ENCODE measurements at regions of chr9 and their contacts with region 1.

Region 1: GRCh38 chr9:92954049-92954861 is 6.9 kb downstream of the FGD3 start:
- DNase-seq: no peak
- H3K4me3 ChIP-seq: no peak overlapping the region
- H3K4me3 Mint-ChIP-seq: no peak overlapping the region
- H3K27ac Mint-ChIP-seq: no peak overlapping the region
- H3K4me1 ChIP-seq: no peaks in the 10 kb centered on the region
- H3K4me1 Mint-ChIP-seq: no peaks in the 10 kb centered on the region
- H3K27me3 ChIP-seq: no peaks in the 10 kb centered on the region
- H3K27me3 Mint-ChIP-seq: no peaks in the 10 kb centered on the region
- CTCF ChIP-seq: no peak

Region 2: DNA sequence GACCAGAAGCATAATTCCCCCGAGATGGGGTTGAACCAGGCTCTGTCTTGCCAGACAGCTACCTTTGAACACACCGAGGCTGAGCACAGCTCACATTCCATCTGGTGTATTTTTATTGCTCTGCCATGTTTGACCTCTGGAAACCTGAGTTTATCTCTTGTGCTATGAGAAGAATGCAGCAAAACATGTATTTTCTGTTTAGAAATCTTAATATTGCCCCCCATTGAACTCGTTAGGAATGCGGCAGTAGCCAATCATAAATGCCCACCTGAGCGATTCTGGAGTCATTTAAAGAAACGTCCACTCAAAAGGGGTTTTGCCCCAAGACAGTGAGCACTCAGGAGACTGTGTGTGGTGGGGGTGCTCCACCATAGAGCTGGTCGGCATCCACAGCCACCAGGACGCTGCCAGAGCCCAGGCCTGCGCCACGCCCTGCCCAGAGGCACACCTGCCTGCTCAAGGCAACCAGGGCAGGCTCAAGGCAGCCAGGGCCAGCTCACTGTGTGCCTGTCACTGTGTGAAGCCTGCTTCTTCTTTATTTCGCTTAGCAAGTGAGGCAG is 20.0 kb after region 1 on chr9:
- CTCF ChIA-PET with region 1: interaction called, 3 read pairs
- POLR2A ChIA-PET with region 1: interaction called, 3 read pairs
- intact Hi-C with region 1: loop called (anchors 1 kb)
- DNase-seq: peak; percentile 80 to 92
- H3K4me3 ChIP-seq: peak overlapping the region; percentile 22
- H3K4me3 Mint-ChIP-seq: peak overlapping the region; percentile 78
- H3K27ac Mint-ChIP-seq: peak overlapping the region; percentile 99
- H3K4me1 ChIP-seq: peaks cover 47% of the 10 kb centered on the region
- H3K4me1 Mint-ChIP-seq: peaks cover 7% of the 10 kb centered on the region
- H3K27me3 ChIP-seq: no peaks in the 10 kb centered on the region
- H3K27me3 Mint-ChIP-seq: no peaks in the 10 kb centered on the region
- CTCF ChIP-seq: no peak

Region 3: DNA sequence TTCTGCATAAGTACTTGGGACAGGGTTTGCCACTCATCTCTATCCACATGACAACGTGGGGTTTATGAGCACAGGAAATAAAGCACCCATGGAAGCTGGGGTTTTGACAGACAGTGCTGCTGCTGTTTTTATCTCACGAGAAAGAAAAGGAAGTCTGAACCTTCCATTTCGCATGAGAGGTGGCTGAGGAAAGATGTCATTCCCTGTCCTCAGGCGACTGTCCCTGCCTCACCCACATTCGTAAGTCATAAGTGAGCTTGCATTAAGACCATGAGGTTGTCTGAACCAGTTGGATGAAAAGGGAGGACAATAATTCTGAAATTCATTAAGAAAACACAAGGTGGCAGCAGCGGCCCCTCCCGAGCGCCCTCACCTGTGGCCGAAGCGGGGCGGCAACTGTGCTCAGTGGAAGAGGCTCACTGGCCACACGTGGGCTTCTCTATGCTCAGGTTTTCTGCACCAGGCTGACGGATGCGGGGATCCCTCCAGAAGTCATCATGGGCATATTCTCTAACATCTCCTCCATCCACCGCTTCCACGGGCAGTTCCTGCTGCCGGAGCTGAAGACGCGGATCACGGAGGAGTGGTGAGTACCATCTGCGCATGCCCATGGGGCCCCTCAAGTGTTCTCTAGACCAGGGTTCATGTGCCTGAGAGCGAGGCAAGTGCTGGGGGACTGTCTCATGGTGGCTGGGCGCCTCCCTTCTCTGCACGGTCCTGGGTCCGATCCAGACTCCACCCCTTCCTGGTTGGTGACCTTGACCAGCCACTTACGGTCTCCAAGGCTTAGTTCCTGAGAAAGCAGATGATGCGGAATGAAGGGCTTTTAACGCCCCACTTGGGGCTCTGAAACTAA is 49.5 kb after region 1 on chr9:
- CTCF ChIA-PET with region 1: no interaction called
- POLR2A ChIA-PET with region 1: no interaction called
- intact Hi-C with region 1: loop called (anchors 1 kb)
- DNase-seq: peak; percentile 47 to 49
- H3K4me3 ChIP-seq: no peak overlapping the region
- H3K4me3 Mint-ChIP-seq: no peak overlapping the region
- H3K27ac Mint-ChIP-seq: no peak overlapping the region
- H3K4me1 ChIP-seq: no peaks in the 10 kb centered on the region
- H3K4me1 Mint-ChIP-seq: peaks cover 7% of the 10 kb centered on the region
- H3K27me3 ChIP-seq: no peaks in the 10 kb centered on the region
- H3K27me3 Mint-ChIP-seq: no peaks in the 10 kb centered on the region
- CTCF ChIP-seq: peak in 1 of 2 experiments; percentile 43

Measured in Caco-2 (cell line).